A673 (cell line): ENCODE measurements at regions of chr1 and their contacts with region 1.

Region 1: GRCh38 chr1:228004331-228004855 is 2.4 kb upstream of the WNT3A start:
- DNase-seq: no peak
- H3K4me3 ChIP-seq: no peak overlapping the region
- H3K27ac ChIP-seq: no peak overlapping the region
- H3K4me1 ChIP-seq: no peaks in the 10 kb centered on the region
- H3K27me3 ChIP-seq: peaks cover 86% of the 10 kb centered on the region
- CTCF ChIP-seq: peak; percentile 56

Region 2: DNA sequence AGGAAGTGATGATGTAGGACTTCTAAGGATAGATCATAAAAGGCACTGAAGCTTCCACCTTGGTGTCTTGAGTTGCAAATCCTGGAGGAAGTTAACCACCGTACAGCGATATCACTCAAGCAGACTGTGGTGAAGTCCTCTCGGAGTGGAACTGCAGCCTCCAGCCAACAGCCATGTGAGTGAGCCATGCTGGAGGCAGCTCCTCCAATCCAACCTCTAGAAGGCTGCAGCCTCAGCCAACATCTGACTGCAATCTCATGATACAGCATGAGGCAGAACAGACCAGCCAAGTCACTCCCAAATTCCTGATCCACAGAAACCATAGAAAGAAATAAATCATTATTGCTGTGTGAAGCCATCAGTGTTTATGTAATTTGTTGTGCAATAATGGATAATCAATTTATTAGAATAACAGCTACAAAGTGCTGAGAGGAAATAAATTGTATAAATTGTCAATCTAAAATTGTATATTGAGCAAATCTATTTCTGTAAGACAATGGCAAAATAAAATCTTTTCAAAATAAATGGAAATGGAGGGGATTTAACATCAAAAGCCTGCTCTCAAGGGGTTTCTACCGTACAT is 124.0 kb before region 1 on chr1:
- CTCF ChIA-PET with region 1: interaction called, 11 read pairs
- POLR2A ChIA-PET with region 1: no interaction called
- intact Hi-C with region 1: no loop called
- DNase-seq: no peak
- H3K4me3 ChIP-seq: no peak overlapping the region
- H3K27ac ChIP-seq: no peak overlapping the region
- H3K4me1 ChIP-seq: no peaks in the 10 kb centered on the region
- H3K27me3 ChIP-seq: peaks cover 18% of the 10 kb centered on the region
- CTCF ChIP-seq: no peak

Region 3: GRCh38 chr1:227901906-227902645 is 102.3 kb before region 1 on chr1:
- CTCF ChIA-PET with region 1: no interaction called
- POLR2A ChIA-PET with region 1: no interaction called
- intact Hi-C with region 1: no loop called
- DNase-seq: no peak
- H3K4me3 ChIP-seq: no peak overlapping the region
- H3K27ac ChIP-seq: no peak overlapping the region
- H3K4me1 ChIP-seq: no peaks in the 10 kb centered on the region
- H3K27me3 ChIP-seq: no peaks in the 10 kb centered on the region
- CTCF ChIP-seq: no peak

Region 4: GRCh38 chr1:228021362-228021961 is 17.1 kb after region 1 on chr1:
- CTCF ChIA-PET with region 1: no interaction called
- POLR2A ChIA-PET with region 1: no interaction called
- intact Hi-C with region 1: no loop called
- DNase-seq: no peak
- H3K4me3 ChIP-seq: no peak overlapping the region
- H3K27ac ChIP-seq: no peak overlapping the region
- H3K4me1 ChIP-seq: no peaks in the 10 kb centered on the region
- H3K27me3 ChIP-seq: peaks cover 16% of the 10 kb centered on the region
- CTCF ChIP-seq: no peak

Region 5: GRCh38 chr1:228073857-228074545 is 69.6 kb after region 1 on chr1:
- CTCF ChIA-PET with region 1: interaction called, 4 read pairs
- POLR2A ChIA-PET with region 1: no interaction called
- intact Hi-C with region 1: loop called (anchors 5 kb)
- DNase-seq: no peak
- H3K4me3 ChIP-seq: no peak overlapping the region
- H3K27ac ChIP-seq: no peak overlapping the region
- H3K4me1 ChIP-seq: no peaks in the 10 kb centered on the region
- H3K27me3 ChIP-seq: peaks cover 20% of the 10 kb centered on the region
- CTCF ChIP-seq: peak; percentile 37